GM10248 (cell line): ENCODE measurements at regions of chr1 and their contacts with region 1.

Region 1: GRCh38 chr1:110165761-110166317 is 15.5 kb downstream of the SLC6A17 start:
- DNase-seq: no peak
- CTCF ChIP-seq: no peak

Region 2: GRCh38 chr1:110019770-110020169 is 146.1 kb before region 1 on chr1:
- CTCF ChIA-PET with region 1: no interaction called
- POLR2A ChIA-PET with region 1: no interaction called
- DNase-seq: no peak
- CTCF ChIP-seq: no peak

Region 3: GRCh38 chr1:110178825-110179224 is 13.0 kb after region 1 on chr1:
- CTCF ChIA-PET with region 1: interaction called, 14 read pairs
- POLR2A ChIA-PET with region 1: no interaction called
- DNase-seq: no peak
- CTCF ChIP-seq: no peak